Lower leg skin (tissue), 4 donors: ENCODE measurements at regions of chr20 and their contacts with region 1.

Region 1: DNA sequence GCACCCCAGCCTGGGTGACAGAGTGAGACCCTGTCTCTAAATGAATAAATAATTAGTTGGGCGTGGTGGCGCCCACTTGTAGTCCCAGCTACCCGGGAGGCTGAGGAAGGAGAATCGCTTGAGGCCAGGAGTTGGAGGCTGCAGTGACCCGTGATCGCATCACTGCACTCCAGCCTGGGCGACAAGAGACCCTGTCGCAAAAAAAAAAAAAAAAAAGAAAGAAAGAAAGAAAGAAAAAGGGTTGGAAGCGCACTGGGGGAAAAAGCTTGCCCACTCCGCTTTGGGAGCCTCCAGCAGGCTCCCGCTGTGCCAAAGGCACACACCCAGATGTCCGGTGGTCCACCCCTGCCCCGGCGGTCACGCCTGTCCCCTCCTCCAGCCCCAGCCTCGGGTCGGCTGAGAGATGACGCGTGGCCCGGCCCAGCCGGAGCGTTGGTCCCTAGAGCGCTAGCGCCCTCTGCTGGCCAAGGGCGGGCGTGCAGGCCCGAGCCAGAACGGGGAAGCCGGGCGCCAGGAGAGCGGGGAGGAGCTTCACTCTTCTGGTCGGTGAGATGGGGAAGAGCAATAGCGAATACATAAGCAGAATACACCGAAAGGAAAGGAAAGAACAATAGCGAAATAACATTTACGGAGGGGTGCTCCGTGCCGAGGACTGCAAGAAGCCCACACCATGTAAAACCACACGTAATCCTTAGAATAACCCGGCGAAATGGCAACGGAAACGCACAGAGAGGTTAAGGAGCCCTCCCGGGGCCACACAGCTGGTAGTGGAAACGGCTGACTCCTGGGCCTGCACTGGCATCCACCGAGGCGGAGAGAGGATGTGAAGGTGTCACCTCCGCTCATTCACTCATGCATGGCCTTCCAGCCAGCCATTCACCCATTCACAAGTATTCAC is 41.7 kb downstream of the UBE2V1 start:
- DNase-seq: peak; percentile 81 to 98
- H3K4me3 ChIP-seq: no peak overlapping the region
- CTCF ChIP-seq: peak in 1 of 3 donors; percentile 99
- POLR2A ChIP-seq: no peak

Region 2: DNA sequence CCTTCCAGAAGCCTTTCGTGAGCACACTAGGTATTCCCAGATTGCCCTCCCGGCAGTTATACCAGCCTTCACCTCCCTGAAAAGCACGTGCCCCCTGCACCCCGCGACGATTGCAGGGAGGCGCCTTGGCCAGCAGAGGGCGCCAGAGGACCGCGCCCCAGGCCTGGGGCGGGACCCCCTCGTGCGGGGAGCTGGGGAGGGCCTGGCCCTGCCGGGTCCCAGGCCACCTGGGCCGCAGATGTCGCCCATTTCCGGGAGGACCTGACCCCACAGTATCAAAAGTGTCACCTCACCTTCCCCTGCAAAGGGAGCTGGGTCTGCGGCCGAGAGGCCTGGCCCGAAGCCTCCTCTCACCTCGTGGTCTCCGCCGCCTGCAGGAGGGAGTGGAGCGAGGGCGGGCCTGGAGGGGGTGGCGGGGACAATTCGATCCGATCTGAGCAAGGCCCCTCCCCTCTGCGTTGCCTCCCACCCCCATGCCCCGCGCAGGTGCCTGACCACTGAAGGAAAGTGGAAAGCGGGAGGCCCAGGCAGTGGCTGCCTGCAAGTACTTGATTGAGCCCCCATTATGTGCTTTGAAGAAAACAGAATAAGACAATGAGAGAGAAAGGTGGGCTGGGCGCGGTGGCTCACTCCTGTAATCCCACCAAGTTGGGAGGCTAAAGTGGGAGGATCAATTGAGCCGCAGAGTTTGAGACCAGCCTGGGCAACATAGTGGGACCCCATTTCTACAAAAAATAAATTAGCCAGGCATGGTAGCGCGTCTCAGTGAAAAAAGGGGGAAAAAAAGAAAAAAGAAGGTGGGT is 92.0 kb before region 1 on chr20:
- intact Hi-C with region 1: loop called (anchors 2 kb)
- DNase-seq: peak in 1 of 2 donors; percentile 91
- H3K4me3 ChIP-seq: no peak overlapping the region
- CTCF ChIP-seq: peak in 1 of 3 donors; percentile 92
- POLR2A ChIP-seq: no peak